Ascending aorta (tissue), 2 donors: ENCODE measurements at regions of chr15 and their contacts with region 1.

Region 1: DNA sequence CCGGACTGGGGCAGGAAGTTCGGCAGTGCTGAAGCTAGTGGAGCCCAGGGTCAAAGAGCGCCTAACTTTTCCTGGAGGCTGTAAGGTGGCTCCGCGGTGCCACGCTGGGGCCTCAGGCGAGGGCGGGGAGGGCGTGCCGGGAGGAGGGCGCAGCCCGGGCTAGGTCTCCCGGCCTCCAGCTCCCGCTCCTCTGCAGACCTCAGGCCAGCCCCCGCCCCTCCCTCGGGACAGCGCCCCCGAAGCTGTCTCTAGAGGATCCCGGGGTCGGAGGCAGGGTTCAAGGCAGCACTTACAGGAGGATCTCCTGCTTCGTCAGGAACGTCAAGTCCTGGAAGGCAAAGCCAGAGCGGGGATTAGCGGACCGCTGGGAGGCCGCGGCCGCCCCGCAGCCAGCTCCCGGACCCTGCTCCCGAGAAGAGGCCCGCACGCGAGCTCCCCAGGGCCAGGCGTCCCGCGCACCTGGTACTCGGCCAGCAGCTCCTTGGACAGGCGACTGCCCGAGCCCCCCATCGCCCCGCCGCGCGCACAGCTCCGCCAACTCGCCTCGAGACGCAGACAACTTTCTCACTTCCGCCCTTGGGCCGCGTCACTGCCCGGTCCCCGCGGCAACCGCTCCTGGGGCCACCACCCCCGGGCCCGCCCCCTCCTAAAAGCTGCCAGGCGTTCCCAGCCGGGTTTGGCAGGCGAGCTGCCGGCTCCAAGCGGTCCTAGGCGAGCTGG is at the start of gene CIB1:
- DNase-seq: peak; percentile 91 to 98
- H3K4me3 ChIP-seq: peak within 1 kb of the TSS; percentile 91 to 92
- H3K27ac ChIP-seq: peak within 1 kb of the TSS; percentile 95 to 96
- H3K4me1 ChIP-seq: peaks cover 0 to 22% of the 10 kb centered on the region in 2 donors
- H3K27me3 ChIP-seq: no peaks in the 10 kb centered on the region
- CTCF ChIP-seq: peak in 2 of 3 experiments; percentile 32 to 37
- total RNA-seq, gene CIB1: 50.9 TPM

Region 2: DNA sequence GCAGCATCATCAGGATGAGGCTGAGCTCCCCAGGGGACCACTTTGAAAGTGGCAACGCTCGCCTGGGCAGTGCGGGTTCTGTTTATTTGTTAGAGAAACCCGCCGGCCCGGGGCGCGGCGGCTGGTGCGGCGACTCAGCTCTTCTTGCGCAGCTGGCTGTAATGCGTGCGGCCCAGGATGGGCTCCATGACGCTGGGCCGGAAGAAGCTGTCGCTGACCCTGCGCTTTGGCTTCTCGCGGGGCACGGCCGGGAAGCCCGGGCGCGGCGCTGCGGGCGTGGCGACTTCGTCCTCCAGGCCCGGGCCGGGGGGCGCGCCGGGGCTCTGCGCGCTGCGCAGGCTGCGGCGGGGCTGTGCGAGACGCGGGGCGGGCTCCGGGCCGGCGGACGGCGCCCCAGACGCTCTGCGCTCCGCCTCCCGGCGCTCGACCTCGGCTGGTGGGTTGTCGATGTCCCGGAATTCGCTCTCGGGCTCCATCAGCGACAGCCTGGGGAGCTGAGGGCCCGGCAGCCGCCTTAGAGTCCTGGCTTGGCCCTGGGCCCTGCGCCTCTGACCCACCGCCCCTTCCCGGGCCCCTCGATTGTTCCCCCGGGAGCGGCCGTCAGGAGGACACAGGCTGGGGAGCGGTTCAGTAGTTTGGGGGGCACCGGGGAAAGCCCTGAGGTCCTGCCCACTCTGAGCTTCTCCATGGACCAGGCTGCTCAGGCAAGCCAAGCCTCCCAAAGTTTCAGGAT is 567.9 kb before region 1 on chr15:
- intact Hi-C with region 1: loop called (anchors 10 kb)
- DNase-seq: peak in 1 of 2 donors; percentile 84
- H3K4me3 ChIP-seq: peak overlapping the region; percentile 32 to 55
- H3K27ac ChIP-seq: peak overlapping the region; percentile 96 to 98
- H3K4me1 ChIP-seq: peaks cover 8 to 20% of the 10 kb centered on the region in 2 donors
- H3K27me3 ChIP-seq: no peaks in the 10 kb centered on the region
- CTCF ChIP-seq: no peak

Region 3: GRCh38 chr15:90001683-90002427 is 231.7 kb before region 1 on chr15:
- intact Hi-C with region 1: loop called (anchors 10 kb)
- DNase-seq: peak in 1 of 2 donors; percentile 76
- H3K4me3 ChIP-seq: peak overlapping the region; percentile 86 to 96
- H3K27ac ChIP-seq: peak overlapping the region; percentile 81 to 90
- H3K4me1 ChIP-seq: peaks cover 0 to 34% of the 10 kb centered on the region in 2 donors
- H3K27me3 ChIP-seq: no peaks in the 10 kb centered on the region
- CTCF ChIP-seq: no peak

Region 4: DNA sequence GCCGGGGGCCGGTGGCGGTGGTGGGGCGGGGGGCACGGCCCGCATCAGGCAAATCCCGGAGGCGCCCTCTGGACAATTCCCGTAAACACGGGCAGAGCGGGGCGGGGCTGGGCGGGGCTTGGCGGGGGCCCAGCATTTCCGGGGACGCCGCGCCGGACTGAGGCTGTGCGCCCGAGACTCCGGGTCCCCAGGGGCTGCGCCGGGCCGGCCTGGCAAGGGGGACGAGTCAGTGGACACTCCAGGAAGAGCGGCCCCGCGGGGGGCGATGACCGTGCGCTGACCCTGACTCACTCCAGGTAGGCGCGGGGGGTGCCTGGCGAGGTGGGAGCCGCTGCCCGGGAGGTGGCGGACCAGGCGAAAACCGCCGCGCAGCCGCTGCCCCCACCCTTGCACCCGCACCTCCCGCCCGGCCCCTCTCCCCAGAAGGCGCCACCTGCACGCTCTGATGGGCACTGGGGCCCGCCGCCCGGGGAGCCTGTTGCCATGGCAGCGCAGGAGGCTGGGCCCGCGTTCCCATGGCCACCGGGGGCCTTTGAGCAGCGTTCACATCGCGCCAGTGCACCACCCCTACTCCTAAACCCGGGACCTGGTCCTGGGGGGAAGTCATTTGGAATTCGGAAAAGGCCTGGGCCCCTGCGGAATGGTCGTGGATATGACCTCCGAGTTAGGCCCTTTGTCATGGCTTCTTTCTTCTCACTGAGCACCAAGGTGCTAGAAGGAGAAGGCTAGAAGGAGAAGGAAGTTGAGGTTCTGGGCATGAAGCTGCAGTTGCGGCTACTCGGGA is 48.6 kb before region 1 on chr15:
- intact Hi-C with region 1: loop called (anchors 2 kb)
- DNase-seq: peak in 1 of 2 donors; percentile 84
- H3K4me3 ChIP-seq: peak overlapping the region; percentile 84 to 87
- H3K27ac ChIP-seq: peak overlapping the region; percentile 90
- H3K4me1 ChIP-seq: peaks cover 3 to 11% of the 10 kb centered on the region in 2 donors
- H3K27me3 ChIP-seq: no peaks in the 10 kb centered on the region
- CTCF ChIP-seq: no peak

Region 5: DNA sequence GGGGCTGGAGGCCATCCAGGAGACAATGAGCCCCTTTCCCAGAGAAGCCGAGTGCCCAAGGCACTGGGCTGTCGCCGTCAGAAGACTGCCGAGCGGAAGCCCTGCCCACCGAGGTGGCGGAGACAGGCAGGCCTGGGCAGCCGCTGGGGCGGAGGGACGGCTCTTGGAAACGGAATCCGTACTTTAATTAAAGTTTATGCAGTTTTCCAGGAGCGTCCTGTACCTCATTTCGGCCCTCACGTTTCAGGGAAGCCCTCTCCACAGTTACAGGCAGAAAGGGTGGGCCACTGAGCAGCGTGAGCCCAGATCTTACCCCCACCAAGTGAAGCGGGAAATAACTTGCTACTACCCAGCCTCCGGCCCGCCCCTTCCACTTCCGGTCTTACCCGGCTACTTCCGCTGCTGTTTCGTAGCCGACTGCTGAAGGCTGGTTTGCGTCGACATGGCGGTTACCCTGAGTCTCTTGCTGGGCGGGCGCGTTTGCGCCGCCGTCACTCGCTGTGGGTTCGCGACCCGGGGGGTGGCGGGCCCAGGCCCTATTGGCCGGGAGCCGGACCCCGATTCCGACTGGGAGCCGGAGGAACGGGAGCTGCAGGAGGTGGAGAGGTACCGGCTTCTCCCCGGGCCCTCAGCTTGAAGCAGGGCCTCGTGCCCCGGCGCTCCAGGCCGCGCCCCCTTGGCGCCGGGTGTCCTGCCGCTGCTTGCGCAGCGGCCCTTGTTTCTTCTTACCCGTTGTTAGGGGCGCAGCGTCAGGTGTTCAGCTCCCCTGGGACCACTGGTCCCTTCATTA is 31.9 kb after region 1 on chr15 and contains the start of gene NGRN:
- intact Hi-C with region 1: loop called (anchors 1 kb)
- DNase-seq: peak; percentile 68 to 95
- H3K4me3 ChIP-seq: peak within 1 kb of the TSS; percentile 62 to 71
- H3K27ac ChIP-seq: peak within 1 kb of the TSS; percentile 89 to 98
- H3K4me1 ChIP-seq: peaks cover 4 to 24% of the 10 kb centered on the region in 2 donors
- H3K27me3 ChIP-seq: no peaks in the 10 kb centered on the region
- CTCF ChIP-seq: no peak
- total RNA-seq, gene NGRN: 58.0 TPM